ENCODE measurements at regions of chr6 and their contacts with region 1.

Region 1: GRCh38 chr6:3251462-3252314 is 7.1 kb upstream of the PSMG4 start:
- DNase-seq: peak; percentile 87
- CTCF ChIP-seq: peak; percentile 93

Region 2: DNA sequence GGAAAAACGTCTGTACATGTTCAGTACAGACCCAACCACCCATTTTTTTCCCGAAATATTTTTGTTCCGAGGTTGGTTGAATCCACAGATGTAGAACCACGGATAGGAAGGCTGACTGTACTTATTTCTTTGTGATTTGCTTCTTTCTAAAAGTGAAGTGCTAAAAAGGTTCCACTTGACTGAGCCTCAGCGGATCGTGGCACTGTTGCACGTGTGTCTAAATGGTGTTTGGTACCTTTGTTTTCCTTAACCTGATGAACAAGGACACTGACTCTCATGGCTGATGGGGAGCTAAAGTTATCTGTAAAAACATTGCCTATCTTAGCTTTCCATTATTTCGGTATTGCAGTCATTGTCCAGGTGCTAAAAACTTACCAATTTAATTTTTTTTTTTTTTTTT is 127.0 kb before region 1 on chr6:
- CTCF ChIA-PET with region 1: interaction called, 27 read pairs
- POLR2A ChIA-PET with region 1: no interaction called
- DNase-seq: no peak
- CTCF ChIP-seq: no peak

Region 3: GRCh38 chr6:3157131-3157927 is 94.4 kb before region 1 on chr6 and contains the start of gene TUBB2A:
- CTCF ChIA-PET with region 1: interaction called, 15 read pairs
- POLR2A ChIA-PET with region 1: no interaction called
- DNase-seq: peak; percentile 97
- CTCF ChIP-seq: peak; percentile 60

Region 4: DNA sequence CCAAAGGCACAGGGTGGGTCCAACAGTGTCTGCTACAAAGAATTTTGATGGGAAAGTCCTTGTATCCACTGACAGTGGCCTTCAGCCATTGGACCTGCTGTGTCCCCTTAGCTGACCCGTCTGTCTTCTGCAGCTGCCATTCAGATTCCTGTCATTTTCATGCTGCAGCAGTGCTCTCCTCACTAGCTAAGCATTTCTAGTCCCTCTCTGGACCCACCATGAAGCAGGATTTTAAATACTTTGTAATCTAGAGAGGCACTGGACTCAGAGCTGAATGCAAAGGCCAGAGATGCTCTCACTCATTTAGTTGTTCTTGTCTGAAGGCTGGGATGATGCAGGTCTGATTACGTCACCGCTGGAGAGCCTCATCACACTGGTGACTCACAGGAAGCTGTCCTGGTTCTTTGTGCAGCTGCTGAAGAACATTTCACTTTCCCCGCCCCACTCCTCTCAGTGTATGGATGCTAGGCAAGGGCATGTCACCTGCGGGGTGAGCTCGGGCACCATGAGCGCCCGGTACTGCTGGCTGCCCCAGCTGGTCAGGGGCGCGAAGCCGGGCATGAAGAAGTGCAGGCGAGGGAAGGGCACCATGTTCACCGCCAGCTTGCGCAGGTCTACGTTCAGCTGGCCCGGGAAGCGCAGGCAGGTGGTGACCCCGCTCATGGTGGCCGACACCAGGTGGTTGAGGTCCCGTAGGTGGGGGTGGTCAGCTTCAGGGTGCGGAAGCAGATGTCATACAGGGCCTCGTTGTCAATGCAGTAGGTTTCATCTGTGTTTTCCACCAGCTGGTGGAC is 74.9 kb before region 1 on chr6:
- CTCF ChIA-PET with region 1: no interaction called
- POLR2A ChIA-PET with region 1: no interaction called
- DNase-seq: no peak
- CTCF ChIP-seq: no peak

Region 5: GRCh38 chr6:3209114-3210023 is 42.3 kb before region 1 on chr6:
- CTCF ChIA-PET with region 1: interaction called, 33 read pairs
- POLR2A ChIA-PET with region 1: no interaction called
- DNase-seq: peak; percentile 60
- CTCF ChIP-seq: peak; percentile 43

Region 6: GRCh38 chr6:3239110-3239830 is 12.4 kb before region 1 on chr6:
- CTCF ChIA-PET with region 1: interaction called, 30 read pairs
- POLR2A ChIA-PET with region 1: no interaction called
- DNase-seq: no peak
- CTCF ChIP-seq: no peak

Region 7: GRCh38 chr6:3287936-3288707 is 36.4 kb after region 1 on chr6:
- CTCF ChIA-PET with region 1: no interaction called
- POLR2A ChIA-PET with region 1: no interaction called
- DNase-seq: no peak
- CTCF ChIP-seq: no peak